ENCODE measurements at regions of chr6 and their contacts with region 1.

Region 1: GRCh38 chr6:129102741-129103140 is 219.8 kb downstream of the LAMA2 start:
- DNase-seq: peak; percentile 42 to 75 (median 60)
- ATAC-seq: peak; percentile 60 to 91 (median 88)
- H3K4me3 ChIP-seq: no peak overlapping the region
- H3K27ac ChIP-seq: peak overlapping the region; percentile 3 to 81 (median 62)
- H3K4me1 ChIP-seq: peaks cover 0 to 73% (median 37%) of the 10 kb centered on the region in 12 donors
- H3K27me3 ChIP-seq: no peaks in the 10 kb centered on the region
- CTCF ChIP-seq: no peak
- POLR2A ChIP-seq: no peak

Region 2: DNA sequence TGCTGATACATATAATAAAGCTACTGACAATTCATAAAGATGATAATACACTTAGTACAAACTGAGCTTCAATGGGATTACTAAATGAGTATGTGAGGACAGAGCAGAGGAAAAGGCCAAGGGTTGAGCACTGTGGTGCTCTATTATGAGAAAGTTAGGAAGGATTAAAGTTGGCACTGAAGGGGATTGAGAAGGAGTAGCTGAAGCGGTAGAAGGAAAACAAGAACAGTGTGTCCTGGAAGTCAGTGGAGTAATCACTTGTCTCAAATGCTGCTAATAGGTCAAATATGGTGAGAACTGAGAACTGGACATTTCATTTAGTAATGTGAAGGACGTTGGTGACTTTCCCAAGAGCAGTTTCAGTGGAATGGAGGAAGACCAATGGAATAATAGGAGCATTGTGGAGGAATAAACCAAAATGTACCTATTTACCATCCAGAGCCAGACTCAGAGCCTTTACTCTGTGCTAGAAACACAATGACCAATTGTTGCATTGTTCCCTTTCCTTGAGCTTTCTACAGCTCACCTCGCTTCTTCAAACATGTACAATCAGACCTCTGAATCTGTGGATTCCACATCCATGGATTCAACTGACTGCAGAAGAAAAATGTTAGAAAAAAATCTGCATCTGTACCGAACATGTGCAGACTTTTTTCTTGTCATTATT is 36.1 kb after region 1 on chr6:
- intact Hi-C with region 1: loop called in 1 of 10 experiments (anchors 5 kb)
- DNase-seq: no peak
- ATAC-seq: peak; percentile 25 to 78 (median 51)
- H3K4me3 ChIP-seq: no peak overlapping the region
- H3K27ac ChIP-seq: peak overlapping the region; percentile 18 to 90 (median 76)
- H3K4me1 ChIP-seq: peaks cover 0 to 89% (median 56%) of the 10 kb centered on the region in 12 donors
- H3K27me3 ChIP-seq: no peaks in the 10 kb centered on the region
- CTCF ChIP-seq: no peak
- POLR2A ChIP-seq: no peak

Measured in heart left ventricle (tissue), 16 donors.